Activated CD4-positive, alpha-beta T cell treated with anti-CD3 and anti-CD28 coated beads for 36 hours (primary cell): ENCODE measurements at regions of chr18 and their contacts with region 1.

Region 1: GRCh38 chr18:51110073-51110803 is 80.2 kb downstream of the SMAD4 start:
- DNase-seq: peak; percentile 85
- ATAC-seq: peak; percentile 86
- H3K4me3 Mint-ChIP-seq: no peak overlapping the region
- H3K27ac Mint-ChIP-seq: no peak overlapping the region
- H3K4me1 Mint-ChIP-seq: peaks cover 12% of the 10 kb centered on the region
- H3K27me3 Mint-ChIP-seq: no peaks in the 10 kb centered on the region

Region 2: DNA sequence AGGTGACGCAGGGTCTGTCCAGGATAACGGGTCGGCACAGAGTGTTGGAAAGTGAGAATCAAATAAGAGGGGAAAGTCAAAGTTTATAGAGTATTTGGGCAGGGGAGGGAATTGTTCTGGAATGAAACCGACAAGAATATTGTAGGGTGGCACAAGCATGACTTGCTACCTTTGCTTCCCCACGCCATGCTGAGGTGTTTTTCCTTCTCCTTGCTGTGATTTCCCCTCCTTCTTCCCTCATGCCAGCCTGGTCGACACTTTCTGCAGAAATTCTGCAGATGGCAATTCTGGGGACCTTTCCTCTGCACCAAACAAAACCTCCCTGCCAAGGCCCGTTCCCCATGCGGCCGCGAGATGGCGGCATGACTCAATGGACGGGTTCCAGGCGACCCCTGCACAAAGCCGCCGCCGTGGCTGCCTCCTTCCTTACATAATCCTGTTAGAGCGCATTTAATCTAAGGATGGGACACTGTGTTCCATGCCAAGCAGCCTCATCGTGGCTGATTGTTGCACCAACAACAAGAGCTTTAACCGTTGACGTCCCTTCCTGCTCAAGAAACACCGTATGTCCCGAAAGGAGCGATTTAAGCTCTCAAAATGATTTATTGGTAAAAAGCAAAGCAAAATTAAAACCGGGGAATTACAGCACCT is 290.4 kb before region 1 on chr18 and contains the start of gene MRO:
- CTCF ChIA-PET with region 1: interaction called, 5 read pairs
- POLR2A ChIA-PET with region 1: no interaction called
- intact Hi-C with region 1: loop called in 1 of 2 experiments (anchors 1 kb)
- DNase-seq: peak; percentile 88
- ATAC-seq: peak; percentile 100
- H3K4me3 Mint-ChIP-seq: no peak within 1 kb of the TSS
- H3K27ac Mint-ChIP-seq: no peak within 1 kb of the TSS
- H3K4me1 Mint-ChIP-seq: no peaks in the 10 kb centered on the region
- H3K27me3 Mint-ChIP-seq: peaks cover 14% of the 10 kb centered on the region
- total RNA-seq, gene MRO: not detected

Region 3: DNA sequence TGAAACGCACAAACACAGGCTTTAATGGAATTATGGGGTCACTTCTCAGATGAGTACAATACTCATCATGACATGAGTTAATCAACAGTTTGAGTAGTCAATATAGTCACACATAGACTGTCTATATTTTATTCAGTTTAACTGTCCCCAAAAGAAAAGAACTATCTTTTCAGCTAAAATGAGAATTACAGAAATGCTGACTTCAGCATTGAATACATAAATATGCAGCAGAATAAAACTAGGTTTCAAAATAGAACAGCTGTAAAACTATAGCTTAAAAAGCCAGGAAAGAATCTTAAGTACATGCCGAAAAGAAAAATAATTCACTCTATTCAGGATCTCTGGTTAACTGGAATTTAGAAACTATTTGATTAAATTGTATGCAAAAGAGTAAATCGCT is 50.3 kb before region 1 on chr18:
- CTCF ChIA-PET with region 1: no interaction called
- POLR2A ChIA-PET with region 1: no interaction called
- intact Hi-C with region 1: no loop called
- DNase-seq: no peak
- ATAC-seq: no peak
- H3K4me3 Mint-ChIP-seq: no peak overlapping the region
- H3K27ac Mint-ChIP-seq: no peak overlapping the region
- H3K4me1 Mint-ChIP-seq: peaks cover 5% of the 10 kb centered on the region
- H3K27me3 Mint-ChIP-seq: no peaks in the 10 kb centered on the region

Region 4: GRCh38 chr18:51383116-51383515 is 272.9 kb after region 1 on chr18:
- CTCF ChIA-PET with region 1: interaction called, 3 read pairs
- POLR2A ChIA-PET with region 1: no interaction called
- intact Hi-C with region 1: loop called in 1 of 2 experiments (anchors 2 kb)
- DNase-seq: no peak
- ATAC-seq: no peak
- H3K4me3 Mint-ChIP-seq: no peak overlapping the region
- H3K27ac Mint-ChIP-seq: no peak overlapping the region
- H3K4me1 Mint-ChIP-seq: no peaks in the 10 kb centered on the region
- H3K27me3 Mint-ChIP-seq: peaks cover 3% of the 10 kb centered on the region

Region 5: DNA sequence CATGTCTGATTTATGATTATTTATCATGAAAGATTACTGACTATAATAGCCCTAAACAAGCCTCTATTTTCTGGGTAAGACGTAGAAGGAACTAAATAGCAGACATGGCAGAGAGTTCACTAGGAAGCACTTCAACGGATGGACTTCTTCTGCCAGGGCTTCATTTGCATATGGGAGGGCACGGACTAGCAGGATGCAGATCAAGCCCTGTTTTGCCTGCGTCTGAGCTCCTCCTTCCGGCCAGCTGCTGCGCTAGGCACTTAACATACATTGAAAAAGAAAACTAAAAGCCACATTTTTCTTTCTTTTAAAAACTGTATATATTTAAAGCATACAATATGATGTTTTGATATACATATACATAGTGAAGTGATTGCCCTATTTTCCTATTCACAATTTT is 427.2 kb after region 1 on chr18:
- CTCF ChIA-PET with region 1: no interaction called
- POLR2A ChIA-PET with region 1: no interaction called
- intact Hi-C with region 1: loop called (anchors 10 kb)
- DNase-seq: peak; percentile 36
- ATAC-seq: peak; percentile 49
- H3K4me3 Mint-ChIP-seq: no peak overlapping the region
- H3K27ac Mint-ChIP-seq: no peak overlapping the region
- H3K4me1 Mint-ChIP-seq: peaks cover 3% of the 10 kb centered on the region
- H3K27me3 Mint-ChIP-seq: peaks cover 5% of the 10 kb centered on the region

Region 6: DNA sequence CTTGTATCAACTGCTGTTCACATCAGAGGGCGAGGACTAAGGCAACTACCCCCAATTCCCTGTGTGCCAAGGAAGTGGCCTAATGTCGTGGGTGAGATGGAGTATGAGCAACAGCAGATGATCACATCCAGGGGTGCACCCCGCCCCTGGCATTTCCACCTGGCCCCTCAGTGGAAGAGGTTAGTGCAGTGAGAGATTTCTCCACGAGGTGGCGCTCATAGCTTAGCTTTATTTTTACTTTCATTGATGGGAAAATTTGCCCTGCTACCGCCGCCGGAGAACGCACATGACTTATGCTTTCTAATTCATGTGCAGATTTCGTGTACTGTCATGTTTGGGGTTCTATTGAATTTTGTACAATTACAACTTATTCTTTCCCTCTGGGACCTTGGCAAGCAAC is 557.9 kb after region 1 on chr18:
- CTCF ChIA-PET with region 1: no interaction called
- POLR2A ChIA-PET with region 1: no interaction called
- intact Hi-C with region 1: loop called in 1 of 2 experiments (anchors 5 kb)
- DNase-seq: peak; percentile 77
- ATAC-seq: peak; percentile 53
- H3K4me3 Mint-ChIP-seq: no peak overlapping the region
- H3K27ac Mint-ChIP-seq: no peak overlapping the region
- H3K4me1 Mint-ChIP-seq: no peaks in the 10 kb centered on the region
- H3K27me3 Mint-ChIP-seq: peaks cover 16% of the 10 kb centered on the region